ENCODE measurements at regions of chr7 and their contacts with region 1.

Region 1: GRCh38 chr7:116211006-116211912 is 920 bp downstream of the TES start:
- DNase-seq: peak; percentile 69
- ATAC-seq: peak; percentile 80
- H3K4me3 Mint-ChIP-seq: peak overlapping the region; percentile 97
- H3K27ac Mint-ChIP-seq: peak overlapping the region; percentile 96
- H3K4me1 Mint-ChIP-seq: peaks cover 42% of the 10 kb centered on the region
- H3K27me3 Mint-ChIP-seq: no peaks in the 10 kb centered on the region

Region 2: DNA sequence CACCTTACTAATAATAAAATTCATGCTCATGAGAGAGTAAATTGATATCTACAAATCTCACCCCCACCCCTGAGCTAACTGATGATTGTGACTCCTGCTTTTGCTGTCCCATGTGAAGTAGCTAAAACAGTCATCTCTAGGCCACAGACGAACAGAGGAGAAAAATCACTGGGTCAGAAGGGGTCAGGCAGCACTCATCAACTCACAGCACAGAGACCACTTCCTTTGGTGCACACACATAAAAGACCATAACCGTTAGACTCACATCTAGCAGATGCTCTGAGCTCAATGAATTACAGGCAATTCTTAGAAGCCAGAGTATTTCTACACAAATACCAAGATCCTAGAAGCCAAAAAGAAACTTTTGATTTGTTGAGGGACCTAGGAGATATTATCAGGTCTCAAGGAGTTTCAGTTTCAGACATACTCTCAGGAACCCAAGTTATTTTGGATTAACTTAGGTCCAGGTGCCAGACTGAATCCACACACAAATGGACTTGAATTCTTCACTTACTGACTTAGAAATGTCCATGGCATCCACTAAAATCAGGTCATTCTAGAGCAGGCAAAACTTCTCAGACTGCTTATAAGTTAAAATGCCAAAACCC is 65.9 kb before region 1 on chr7:
- POLR2A ChIA-PET with region 1: interaction called, 23 read pairs
- DNase-seq: peak; percentile 31
- ATAC-seq: peak; percentile 99
- H3K4me3 Mint-ChIP-seq: peak overlapping the region; percentile 83
- H3K27ac Mint-ChIP-seq: peak overlapping the region; percentile 94
- H3K4me1 Mint-ChIP-seq: peaks cover 66% of the 10 kb centered on the region
- H3K27me3 Mint-ChIP-seq: no peaks in the 10 kb centered on the region

Region 3: GRCh38 chr7:116200963-116201362 is 10.3 kb before region 1 on chr7:
- POLR2A ChIA-PET with region 1: interaction called, 11 read pairs
- DNase-seq: no peak
- ATAC-seq: no peak
- H3K4me3 Mint-ChIP-seq: no peak overlapping the region
- H3K27ac Mint-ChIP-seq: no peak overlapping the region
- H3K4me1 Mint-ChIP-seq: no peaks in the 10 kb centered on the region
- H3K27me3 Mint-ChIP-seq: peaks cover 13% of the 10 kb centered on the region

Measured in activated naive CD8-positive, alpha-beta T cell treated with anti-CD3 and anti-CD28 coated beads, Interleukin-2, amount 10 ng/mL, durations not matched to agents 7 days and 5 days (primary cell).